ENCODE measurements at regions of chr2 and their contacts with region 1.

Region 1: DNA sequence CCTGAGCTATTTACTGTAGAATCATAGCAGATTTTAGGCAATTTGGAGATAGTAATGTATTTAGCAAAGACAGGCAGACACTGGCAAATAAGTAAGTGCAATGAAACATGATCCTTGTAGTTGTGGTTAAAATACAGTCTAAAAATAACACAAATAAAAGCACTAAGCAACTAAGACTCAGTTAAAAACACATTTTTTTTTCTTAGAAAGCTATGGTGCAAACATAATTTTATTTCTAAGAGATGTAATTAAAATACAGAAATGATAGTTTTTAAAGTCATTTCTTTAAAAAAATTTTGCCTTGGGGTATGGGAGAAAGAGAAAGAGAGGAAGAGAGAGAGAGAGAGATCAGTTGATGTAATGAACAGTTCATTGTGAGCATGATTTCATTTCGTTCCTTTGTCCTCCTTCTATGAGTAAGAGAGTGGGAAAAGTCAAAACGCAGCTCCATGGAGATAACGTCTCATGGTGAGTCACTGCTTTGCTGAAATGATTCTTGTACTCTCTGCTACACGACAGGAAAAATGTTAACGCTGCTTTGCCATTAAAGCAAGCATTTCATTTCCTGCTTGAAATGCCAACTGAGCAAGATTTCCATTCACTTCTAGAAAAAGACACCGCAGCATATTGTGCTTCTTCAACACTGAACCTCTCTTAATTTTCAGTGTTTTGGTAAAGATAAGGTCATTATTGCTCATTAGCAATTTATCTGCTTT is 61.3 kb upstream of the PGAP1 start:
- DNase-seq: peak; percentile 61 to 92 (median 81)
- H3K4me3 ChIP-seq: peak overlapping the region in 1 of 3 experiments; percentile 33
- H3K4me3 Mint-ChIP-seq: peak overlapping the region in 1 of 2 donors; percentile 59
- H3K27ac ChIP-seq: peak overlapping the region in 1 of 2 donors; percentile 76
- H3K27ac Mint-ChIP-seq: peak overlapping the region; percentile 9 to 92 (median 46)
- H3K4me1 ChIP-seq: peaks cover 53 to 78% of the 10 kb centered on the region in 2 donors
- H3K4me1 Mint-ChIP-seq: peaks cover 67% of the 10 kb centered on the region
- H3K27me3 ChIP-seq: no peaks in the 10 kb centered on the region
- H3K27me3 Mint-ChIP-seq: no peaks in the 10 kb centered on the region
- CTCF ChIP-seq: no peak

Region 2: GRCh38 chr2:196926562-196927375 is 61.0 kb before region 1 on chr2 and contains the start of gene PGAP1:
- intact Hi-C with region 1: loop called in 1 of 2 experiments (anchors 5 kb)
- DNase-seq: peak; percentile 70 to 82 (median 75)
- H3K4me3 ChIP-seq: peak within 1 kb of the TSS; percentile 87 to 96 (median 95)
- H3K4me3 Mint-ChIP-seq: peak within 1 kb of the TSS; percentile 98 to 99
- H3K27ac ChIP-seq: peak within 1 kb of the TSS; percentile 53 to 64
- H3K27ac Mint-ChIP-seq: peak within 1 kb of the TSS; percentile 74 to 95 (median 89)
- H3K4me1 ChIP-seq: peaks cover 20 to 22% of the 10 kb centered on the region in 2 donors
- H3K4me1 Mint-ChIP-seq: peaks cover 26% of the 10 kb centered on the region
- H3K27me3 ChIP-seq: peaks cover 6 to 18% of the 10 kb centered on the region in 2 donors
- H3K27me3 Mint-ChIP-seq: peaks cover 11 to 17% (median 16%) of the 10 kb centered on the region in 3 donors
- CTCF ChIP-seq: no peak
- polyA plus RNA-seq, gene PGAP1: 0.10 to 0.81 (median 0.33) TPM

Region 3: DNA sequence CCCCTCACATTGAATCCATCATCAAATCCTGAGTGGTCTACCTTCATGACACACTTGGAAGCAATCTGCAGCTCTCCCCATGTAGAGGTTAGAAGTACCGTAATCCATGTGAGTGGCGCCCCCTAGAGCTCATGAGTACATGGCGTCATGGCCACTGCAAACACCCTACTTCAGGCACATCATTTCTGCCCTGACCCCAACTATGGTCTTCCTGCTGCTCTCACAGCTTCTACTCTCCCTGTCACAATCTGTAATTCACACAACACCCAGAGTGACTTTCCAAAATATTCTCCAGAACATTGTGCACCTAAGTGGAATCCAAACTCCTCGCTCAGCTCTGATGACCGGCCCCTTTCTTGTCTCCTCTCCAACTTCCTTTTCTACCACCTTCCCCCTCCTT is 180.9 kb after region 1 on chr2:
- intact Hi-C with region 1: loop called in 1 of 2 experiments (anchors 10 kb)
- DNase-seq: peak; percentile 56 to 72 (median 71)
- H3K4me3 ChIP-seq: no peak overlapping the region
- H3K4me3 Mint-ChIP-seq: peak overlapping the region; percentile 54 to 57
- H3K27ac ChIP-seq: peak overlapping the region in 1 of 2 donors; percentile 68
- H3K27ac Mint-ChIP-seq: peak overlapping the region; percentile 41 to 83 (median 70)
- H3K4me1 ChIP-seq: peaks cover 10 to 13% of the 10 kb centered on the region in 2 donors
- H3K4me1 Mint-ChIP-seq: peaks cover 21% of the 10 kb centered on the region
- H3K27me3 ChIP-seq: no peaks in the 10 kb centered on the region
- H3K27me3 Mint-ChIP-seq: peaks cover 0 to 1% (median 0%) of the 10 kb centered on the region in 3 donors
- CTCF ChIP-seq: peak; percentile 83